ENCODE measurements at regions of chr10 and their contacts with region 1.

Region 1: DNA sequence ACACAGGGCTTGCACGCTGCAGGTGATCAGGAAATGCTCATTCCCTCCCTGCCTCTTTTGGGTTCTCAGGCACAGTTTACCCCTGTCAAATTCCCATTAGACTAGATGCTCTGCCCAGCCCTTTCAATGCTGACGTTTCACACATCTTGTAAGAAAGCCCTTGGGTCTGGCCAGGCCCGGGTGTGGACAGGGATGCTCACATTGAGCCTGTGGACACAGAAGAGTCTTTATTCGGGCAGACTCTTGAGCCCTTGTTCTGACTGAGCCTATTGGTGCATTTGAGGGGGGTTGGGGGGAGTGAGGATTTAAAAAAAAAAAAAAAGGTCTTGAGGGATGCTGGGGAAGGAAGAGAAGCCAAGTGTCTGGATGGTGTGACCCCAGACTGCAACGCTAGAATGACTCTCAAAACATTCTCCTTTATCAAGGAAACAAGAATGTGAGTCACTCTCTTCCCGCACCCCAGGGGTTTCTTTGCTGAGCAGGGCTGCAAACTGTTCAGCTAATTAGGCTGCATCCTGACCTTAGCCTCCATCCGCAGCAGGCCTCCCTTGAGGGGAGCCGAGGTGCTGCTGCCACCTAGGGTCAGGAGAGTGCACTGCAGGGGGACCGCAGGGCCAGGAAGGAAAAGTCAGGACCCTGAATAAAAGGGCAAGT is 53.6 kb upstream of the TMEM72 start:
- H3K4me3 Mint-ChIP-seq: no peak overlapping the region
- H3K27ac Mint-ChIP-seq: no peak overlapping the region
- H3K4me1 Mint-ChIP-seq: no peaks in the 10 kb centered on the region
- H3K27me3 Mint-ChIP-seq: peaks cover 7% of the 10 kb centered on the region

Region 2: DNA sequence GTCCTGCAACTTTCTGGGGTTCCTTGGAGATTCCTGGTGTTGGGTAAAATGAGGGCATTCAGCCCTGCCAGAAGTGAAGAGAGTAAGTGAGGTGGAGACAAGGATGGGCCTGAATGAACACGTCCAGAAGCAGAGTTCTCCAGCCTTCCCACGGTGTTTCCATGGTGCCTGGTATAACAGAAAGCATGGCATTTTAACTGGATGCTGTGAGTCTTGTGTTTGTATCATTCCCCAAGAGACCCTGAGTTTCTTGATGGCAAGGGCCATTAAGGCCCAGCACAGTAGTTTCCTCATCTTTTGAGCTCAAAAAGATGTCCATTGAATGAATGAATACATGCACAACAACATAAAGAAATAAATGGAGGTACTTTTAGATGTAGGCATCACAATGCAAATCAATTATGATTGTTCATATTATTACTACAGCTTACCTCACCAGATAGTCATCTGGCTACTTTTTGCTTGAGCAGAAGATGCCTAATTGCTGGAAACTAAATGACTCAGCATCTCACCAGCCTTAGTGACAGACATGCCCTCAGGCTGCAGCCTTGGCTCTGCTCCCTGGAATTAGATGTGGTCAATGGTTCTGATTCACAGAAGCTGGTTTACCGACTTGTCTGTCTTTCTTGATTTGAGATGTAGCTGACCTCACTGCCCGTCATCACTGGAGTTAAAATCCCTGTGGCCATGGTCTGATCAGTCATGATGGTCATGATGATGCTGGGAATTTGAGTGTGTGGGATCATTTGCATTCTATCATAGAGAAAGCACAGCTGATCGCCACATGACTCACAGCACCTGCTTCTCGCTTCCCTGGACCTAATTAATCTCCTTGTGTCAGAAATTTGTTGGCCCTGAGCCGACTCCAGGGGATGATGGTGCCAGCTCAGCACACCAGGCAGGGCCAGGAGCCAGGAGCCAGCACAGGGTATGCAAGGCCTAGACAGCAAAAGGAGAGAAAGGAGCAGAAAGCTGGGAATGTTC is 556.5 kb before region 1 on chr10:
- intact Hi-C with region 1: loop called (anchors 5 kb)
- H3K4me3 Mint-ChIP-seq: no peak overlapping the region
- H3K27ac Mint-ChIP-seq: no peak overlapping the region
- H3K4me1 Mint-ChIP-seq: no peaks in the 10 kb centered on the region
- H3K27me3 Mint-ChIP-seq: peaks cover 1% of the 10 kb centered on the region

Region 3: DNA sequence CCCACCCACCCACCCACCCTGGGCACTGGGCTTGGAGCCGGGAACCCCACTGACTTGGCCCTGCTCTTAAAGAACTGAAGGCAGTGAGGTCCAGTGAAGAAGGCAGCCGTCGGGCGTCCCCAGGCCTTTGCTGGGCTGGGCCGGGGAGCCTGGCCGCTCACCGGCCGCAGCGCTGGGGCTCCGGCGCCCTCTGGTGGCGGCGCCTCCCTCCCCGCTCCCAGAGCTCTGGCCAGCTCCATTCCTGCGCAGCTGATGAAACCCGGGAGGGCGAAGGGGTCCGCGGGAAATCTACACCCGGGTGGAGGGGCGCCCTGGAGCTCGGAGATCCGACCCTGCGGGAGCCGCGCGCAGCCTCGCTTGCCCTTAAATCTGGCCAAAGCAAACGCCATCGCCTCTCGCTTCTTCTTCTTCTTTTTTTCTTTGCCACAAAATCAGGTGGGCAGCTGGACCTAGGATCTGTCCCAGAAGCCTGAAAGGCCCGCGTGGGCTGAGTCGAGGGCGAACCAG is 470.9 kb before region 1 on chr10:
- intact Hi-C with region 1: loop called (anchors 5 kb)
- H3K4me3 Mint-ChIP-seq: no peak overlapping the region
- H3K27ac Mint-ChIP-seq: no peak overlapping the region
- H3K4me1 Mint-ChIP-seq: no peaks in the 10 kb centered on the region
- H3K27me3 Mint-ChIP-seq: peaks cover 60% of the 10 kb centered on the region

Measured in dendritic cell treated with granulocyte-macrophage colony-stimulating factor and Interleukin-4, amounts not matched to agents 40 ng/mL and 50 ng/mL, for 4 days (primary cell).